ENCODE measurements at regions of chr2 and their contacts with region 1.

Region 1: DNA sequence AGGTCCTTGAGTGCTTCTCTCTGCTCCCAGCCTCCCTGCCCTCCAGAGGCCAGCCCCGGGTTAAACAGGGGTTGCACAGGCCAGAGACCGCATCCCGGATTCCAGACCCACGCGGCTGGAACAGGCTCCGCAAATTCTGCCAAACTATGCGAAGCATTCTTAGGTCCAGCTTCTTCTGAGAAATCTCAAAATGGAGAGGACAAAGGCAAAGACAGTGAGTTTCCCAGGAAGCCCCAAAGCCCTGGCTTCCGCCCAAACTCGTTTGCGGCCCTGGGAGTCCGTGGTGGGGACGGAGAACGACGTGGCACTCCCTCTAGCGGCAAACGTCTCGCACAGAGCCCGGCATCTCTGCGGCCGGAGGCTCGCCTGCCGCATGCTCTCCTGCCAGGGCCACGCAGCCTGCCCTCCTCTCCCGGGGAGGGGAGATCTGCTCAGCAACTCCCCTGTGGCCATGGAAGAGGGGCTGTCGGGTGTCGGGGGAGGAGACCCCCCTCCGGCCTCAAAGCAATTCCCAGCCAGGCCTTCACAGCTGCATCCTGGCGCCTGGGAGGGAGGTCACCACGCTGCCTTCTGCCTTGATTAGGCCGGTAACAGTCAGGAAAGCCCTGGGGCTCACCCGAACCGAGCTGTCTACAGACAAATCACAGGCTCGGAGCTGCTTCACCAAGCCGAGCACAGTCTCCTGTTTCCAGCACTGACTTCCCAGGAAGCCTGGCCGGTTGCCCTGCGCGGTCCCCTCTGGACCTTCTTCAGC is 33.4 kb upstream of the KLHL29 start:
- DNase-seq: peak; percentile 80 to 89
- H3K4me3 ChIP-seq: peak overlapping the region in 1 of 2 donors; percentile 24
- H3K27ac ChIP-seq: peak overlapping the region; percentile 22 to 26
- H3K4me1 ChIP-seq: peaks cover 0 to 17% (median 12%) of the 10 kb centered on the region in 4 donors
- H3K27me3 ChIP-seq: no peaks in the 10 kb centered on the region
- CTCF ChIP-seq: peak; percentile 77 to 88

Region 2: GRCh38 chr2:22355816-22356433 is 995.6 kb before region 1 on chr2:
- intact Hi-C with region 1: loop called (anchors 5 kb)
- DNase-seq: peak; percentile 58 to 74
- H3K4me3 ChIP-seq: no peak overlapping the region
- H3K27ac ChIP-seq: no peak overlapping the region
- H3K4me1 ChIP-seq: peaks cover 0 to 11% (median 0%) of the 10 kb centered on the region in 4 donors
- H3K27me3 ChIP-seq: no peaks in the 10 kb centered on the region
- CTCF ChIP-seq: peak; percentile 79 to 90